Activated naive CD4-positive, alpha-beta T cell treated with anti-CD3 and anti-CD28 coated beads, Interleukin-2, amount 10 ng/mL, durations not matched to agents 7 days and 5 days (primary cell): ENCODE measurements at regions of chr1 and their contacts with region 1.

Region 1: GRCh38 chr1:47179017-47179987 is 10.5 kb downstream of the PDZK1IP1 start:
- DNase-seq: peak; percentile 87
- H3K4me3 Mint-ChIP-seq: peak overlapping the region; percentile 71
- H3K27ac Mint-ChIP-seq: peak overlapping the region; percentile 65
- H3K4me1 Mint-ChIP-seq: peaks cover 4% of the 10 kb centered on the region
- H3K27me3 Mint-ChIP-seq: peaks cover 63% of the 10 kb centered on the region

Region 2: GRCh38 chr1:46675549-46676314 is 503.6 kb before region 1 on chr1:
- CTCF ChIA-PET with region 1: no interaction called
- DNase-seq: no peak
- H3K4me3 Mint-ChIP-seq: peak overlapping the region; percentile 55
- H3K27ac Mint-ChIP-seq: peak overlapping the region; percentile 97
- H3K4me1 Mint-ChIP-seq: peaks cover 39% of the 10 kb centered on the region
- H3K27me3 Mint-ChIP-seq: no peaks in the 10 kb centered on the region

Region 3: DNA sequence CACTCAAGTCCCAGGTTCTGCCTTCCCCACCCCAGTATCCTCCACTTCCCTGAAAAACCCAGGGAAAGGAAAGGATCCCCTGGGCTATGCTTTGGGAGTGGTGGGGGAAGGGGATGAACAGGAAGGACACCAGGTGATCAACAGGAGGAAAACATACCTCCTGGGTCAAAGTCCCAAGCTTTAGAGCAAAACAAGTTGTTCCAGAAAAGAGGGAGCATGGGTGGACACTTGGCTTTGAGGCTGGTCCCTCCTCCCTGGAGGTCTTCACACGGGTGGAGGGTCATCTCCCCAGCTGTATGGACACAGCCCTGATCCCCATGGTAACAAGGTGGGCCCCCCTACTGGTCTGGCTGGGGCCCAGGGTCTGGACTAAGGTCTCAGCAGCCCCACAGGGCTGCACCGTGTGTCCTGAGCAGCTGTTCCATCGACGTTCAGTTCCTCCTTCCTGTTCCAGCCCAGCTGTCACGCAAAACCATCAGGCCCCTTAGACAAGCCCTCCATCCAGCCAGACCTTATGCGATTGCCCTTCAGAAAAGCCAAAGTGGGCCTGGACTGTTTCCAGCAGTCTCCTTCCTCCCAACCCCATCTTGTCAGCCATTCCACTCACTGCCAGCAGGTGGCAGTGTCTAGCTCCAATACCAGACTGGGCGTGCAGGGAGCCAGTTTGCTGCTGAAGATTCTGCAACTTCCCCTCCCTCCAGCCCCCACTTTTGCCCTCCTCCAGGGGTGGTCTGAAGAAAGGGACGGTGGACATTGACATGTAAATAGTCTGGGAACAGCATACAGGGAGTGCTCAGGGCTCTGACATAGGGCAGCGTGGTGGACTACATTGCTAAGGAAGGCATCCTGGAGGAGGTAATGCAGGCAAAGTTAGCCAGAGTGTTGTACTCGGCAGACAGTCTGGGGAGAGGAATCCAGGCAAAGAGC is 13.4 kb after region 1 on chr1:
- CTCF ChIA-PET with region 1: interaction called, 102 read pairs
- DNase-seq: peak; percentile 78
- H3K4me3 Mint-ChIP-seq: no peak overlapping the region
- H3K27ac Mint-ChIP-seq: no peak overlapping the region
- H3K4me1 Mint-ChIP-seq: no peaks in the 10 kb centered on the region
- H3K27me3 Mint-ChIP-seq: peaks cover 30% of the 10 kb centered on the region

Region 4: GRCh38 chr1:47262787-47263413 is 83.6 kb after region 1 on chr1:
- CTCF ChIA-PET with region 1: interaction called, 41 read pairs
- DNase-seq: peak; percentile 66
- H3K4me3 Mint-ChIP-seq: no peak overlapping the region
- H3K27ac Mint-ChIP-seq: no peak overlapping the region
- H3K4me1 Mint-ChIP-seq: no peaks in the 10 kb centered on the region
- H3K27me3 Mint-ChIP-seq: no peaks in the 10 kb centered on the region

Region 5: DNA sequence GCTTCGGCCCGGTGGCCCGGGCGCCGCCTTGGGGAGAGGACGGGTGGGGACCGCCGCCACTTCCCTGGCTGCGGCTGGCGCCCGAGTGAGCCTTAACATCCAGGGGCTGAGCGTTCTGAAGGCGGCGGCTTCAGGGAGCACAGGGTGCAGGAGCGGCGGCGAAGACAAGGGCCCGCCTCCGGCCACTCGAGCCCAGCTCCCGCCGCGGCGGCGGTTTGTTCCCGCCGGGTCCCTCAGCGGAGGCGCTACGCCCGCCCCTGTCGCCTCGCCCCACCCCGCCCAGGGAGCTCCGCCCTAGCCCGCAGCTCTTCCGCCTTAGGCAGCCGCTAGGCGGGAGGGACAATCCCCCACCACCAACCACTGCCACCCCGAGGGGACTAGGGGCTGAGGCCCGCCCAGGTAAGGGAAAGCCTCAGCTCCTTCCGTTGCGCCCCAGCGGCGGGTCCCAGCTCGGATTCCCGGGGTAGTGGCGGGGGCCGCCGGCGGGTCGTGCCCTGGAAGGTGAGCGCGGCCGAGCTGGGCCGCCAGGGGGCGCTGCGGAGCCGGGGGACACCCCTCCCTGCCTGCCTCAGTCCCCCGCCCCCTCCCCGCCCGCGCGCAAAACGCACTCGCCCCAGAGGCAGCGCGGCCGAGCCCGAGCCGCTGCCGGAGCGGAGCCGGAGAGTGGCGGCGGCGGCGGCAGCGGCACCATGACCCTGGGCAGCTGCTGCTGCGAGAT is 258.3 kb after region 1 on chr1 and contains the start of gene FOXD2:
- CTCF ChIA-PET with region 1: interaction called, 21 read pairs
- DNase-seq: peak; percentile 91
- H3K4me3 Mint-ChIP-seq: peak within 1 kb of the TSS; percentile 93
- H3K27ac Mint-ChIP-seq: peak within 1 kb of the TSS; percentile 86
- H3K4me1 Mint-ChIP-seq: peaks cover 34% of the 10 kb centered on the region
- H3K27me3 Mint-ChIP-seq: peaks cover 49% of the 10 kb centered on the region